ENCODE measurements at regions of chr17 and their contacts with region 1.

Region 1: GRCh38 chr17:38922538-38923297 is 2.7 kb upstream of the LASP1NB start:
- DNase-seq: no peak
- H3K4me3 ChIP-seq: no peak overlapping the region
- H3K27me3 ChIP-seq: no peaks in the 10 kb centered on the region
- CTCF ChIP-seq: peak; percentile 20; the same call in 1 of the 2 replicates

Region 2: DNA sequence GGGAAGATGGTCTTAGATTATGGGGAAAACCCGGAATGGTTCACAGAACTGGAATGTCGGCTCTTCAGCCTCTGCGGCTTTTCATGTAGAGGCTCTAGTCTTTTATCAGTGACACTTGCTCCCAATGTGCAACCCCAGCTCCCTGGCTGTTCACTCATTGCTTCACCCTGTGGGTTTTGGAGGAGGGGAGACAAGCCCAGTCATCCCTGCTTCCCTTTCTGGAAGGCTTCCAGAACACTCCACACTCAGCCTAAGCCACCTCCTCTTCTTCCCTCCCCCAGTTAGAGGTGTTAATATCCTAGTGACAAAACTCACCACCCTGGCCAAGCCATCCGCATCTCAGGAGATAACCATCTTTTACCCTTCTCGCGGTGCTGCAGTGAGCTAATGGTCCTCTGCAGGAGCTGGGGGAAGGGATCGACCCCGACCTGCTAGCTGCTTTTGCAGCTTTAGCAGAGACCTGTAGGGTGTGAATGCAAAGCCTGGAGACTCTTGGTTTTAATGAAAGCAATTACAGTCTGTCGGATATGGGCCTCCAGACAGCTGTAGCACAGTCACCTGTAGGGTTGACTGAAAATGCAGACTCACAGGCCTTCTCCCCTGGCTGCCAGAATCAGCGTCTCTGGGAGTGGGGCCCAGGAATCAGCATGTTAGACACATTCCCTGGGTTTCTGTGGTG is 21.6 kb before region 1 on chr17:
- CTCF ChIA-PET with region 1: interaction called, 12 read pairs
- POLR2A ChIA-PET with region 1: no interaction called
- DNase-seq: peak; percentile 75
- H3K4me3 ChIP-seq: no peak overlapping the region
- H3K27me3 ChIP-seq: no peaks in the 10 kb centered on the region
- CTCF ChIP-seq: no peak

Region 3: DNA sequence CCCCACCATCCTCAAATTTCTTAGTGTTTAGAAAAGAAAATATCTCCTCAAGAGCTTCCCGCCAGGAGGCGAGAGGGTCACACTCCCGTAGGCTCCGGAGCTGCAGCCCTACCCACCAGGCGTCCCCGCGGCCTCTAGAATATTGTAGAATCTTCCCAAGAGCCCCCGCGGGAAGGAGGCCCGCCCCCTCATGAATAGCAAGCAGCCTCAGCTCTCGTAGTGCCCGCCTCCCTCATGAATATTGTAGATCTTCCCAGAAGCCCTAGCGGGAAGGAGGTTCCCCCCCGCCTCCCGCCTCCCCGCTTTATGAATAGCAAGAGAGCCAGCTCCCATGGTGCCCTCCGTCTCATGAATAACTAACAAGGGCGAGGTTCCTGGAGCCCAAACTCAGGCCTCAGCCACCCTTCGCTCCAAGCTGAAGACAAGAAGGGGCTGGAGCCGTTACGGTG is 44.6 kb after region 1 on chr17 and contains the start of gene FBXO47:
- CTCF ChIA-PET with region 1: interaction called, 3 read pairs
- POLR2A ChIA-PET with region 1: interaction called, 14 read pairs
- DNase-seq: peak; percentile 58
- H3K4me3 ChIP-seq: peak within 1 kb of the TSS; percentile 27
- H3K27me3 ChIP-seq: no peaks in the 10 kb centered on the region
- CTCF ChIP-seq: peak; percentile 24; the same call in 1 of the 2 replicates
- polyA plus RNA-seq, gene FBXO47: not detected in 2 replicates